ENCODE measurements at regions of chr12 and their contacts with region 1.

Region 1: DNA sequence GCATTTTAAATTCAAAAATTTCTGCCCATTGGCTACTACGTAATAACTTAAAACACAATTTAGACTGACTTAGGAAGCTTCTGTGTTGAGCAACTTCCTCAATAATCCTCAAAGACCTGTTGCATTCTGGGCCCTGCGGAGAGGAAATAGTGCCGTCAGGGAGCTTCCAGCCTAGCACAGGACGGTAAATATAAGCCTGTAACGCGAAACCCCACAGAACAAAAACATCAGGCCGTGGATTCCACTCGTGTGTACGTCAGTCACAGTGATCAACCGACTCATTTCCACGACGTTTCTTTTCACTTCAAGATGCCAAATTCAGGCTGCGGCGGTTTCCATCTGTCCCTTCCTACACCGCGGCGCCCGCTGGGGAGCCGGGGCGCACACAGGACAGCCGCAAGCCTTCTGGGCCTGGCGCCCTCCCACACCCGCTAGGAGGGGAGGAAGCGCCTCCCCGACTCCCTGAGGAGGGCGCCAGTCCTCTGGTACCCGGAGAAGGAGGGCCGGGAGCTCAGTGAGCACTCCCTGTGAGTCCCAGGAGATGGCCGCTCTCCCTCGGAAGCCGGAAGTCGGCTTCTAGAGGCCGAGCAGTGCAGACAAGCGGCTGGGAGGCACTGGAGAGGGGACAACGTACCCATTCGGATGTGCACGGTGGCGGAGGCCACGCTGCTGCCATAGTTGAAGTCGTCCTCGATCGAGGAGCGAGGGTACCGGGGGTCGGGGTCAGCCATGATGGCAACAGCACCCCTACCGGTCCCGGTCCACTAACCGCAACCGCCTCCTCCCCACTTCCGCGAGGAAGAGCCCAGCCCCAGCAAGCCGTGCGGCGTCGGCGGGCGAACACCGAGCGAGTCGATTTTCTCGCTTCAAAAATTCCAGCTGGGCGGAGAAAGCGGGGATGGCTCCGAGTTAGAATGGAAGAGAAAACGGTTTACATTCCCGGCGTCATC is at the start of gene TMBIM4:
- DNase-seq: peak; percentile 62 to 93 (median 84)
- ATAC-seq: peak; percentile 79
- H3K4me3 ChIP-seq: peak within 1 kb of the TSS; percentile 93 to 96
- H3K4me3 Mint-ChIP-seq: peak within 1 kb of the TSS; percentile 95
- H3K27ac ChIP-seq: peak within 1 kb of the TSS; percentile 97
- H3K27ac Mint-ChIP-seq: peak within 1 kb of the TSS; percentile 99
- H3K4me1 ChIP-seq: peaks cover 17% of the 10 kb centered on the region
- H3K4me1 Mint-ChIP-seq: peaks cover 51% of the 10 kb centered on the region
- H3K27me3 ChIP-seq: no peaks in the 10 kb centered on the region
- H3K27me3 Mint-ChIP-seq: peaks cover 2% of the 10 kb centered on the region
- CTCF ChIP-seq: peak; percentile 34
- total RNA-seq, gene TMBIM4: 22.4 to 22.7 TPM

Region 2: GRCh38 chr12:66288121-66288520 is 118.6 kb after region 1 on chr12:
- CTCF ChIA-PET with region 1: no interaction called
- POLR2A ChIA-PET with region 1: interaction called, 5 read pairs
- intact Hi-C with region 1: loop called (anchors 1 to 5 kb)
- DNase-seq: peak in 8 of 9 experiments; percentile 38 to 91 (median 68)
- ATAC-seq: peak; percentile 98
- H3K4me3 ChIP-seq: peak overlapping the region in 1 of 2 experiments; percentile 33
- H3K4me3 Mint-ChIP-seq: peak overlapping the region; percentile 72
- H3K27ac ChIP-seq: peak overlapping the region in 1 of 2 experiments; percentile 9
- H3K27ac Mint-ChIP-seq: peak overlapping the region; percentile 83
- H3K4me1 ChIP-seq: peaks cover 77% of the 10 kb centered on the region
- H3K4me1 Mint-ChIP-seq: peaks cover 80% of the 10 kb centered on the region
- H3K27me3 ChIP-seq: no peaks in the 10 kb centered on the region
- H3K27me3 Mint-ChIP-seq: no peaks in the 10 kb centered on the region
- CTCF ChIP-seq: no peak

Measured in CD8-positive, alpha-beta T cell (primary cell).